Sciatic nerve (tissue), 2 donors: ENCODE measurements at regions of chr18 and their contacts with region 1.

Region 1: GRCh38 chr18:71189581-71189980 is 900.7 kb downstream of the SOCS6 start:
- DNase-seq: no peak
- ATAC-seq: no peak

Region 2: DNA sequence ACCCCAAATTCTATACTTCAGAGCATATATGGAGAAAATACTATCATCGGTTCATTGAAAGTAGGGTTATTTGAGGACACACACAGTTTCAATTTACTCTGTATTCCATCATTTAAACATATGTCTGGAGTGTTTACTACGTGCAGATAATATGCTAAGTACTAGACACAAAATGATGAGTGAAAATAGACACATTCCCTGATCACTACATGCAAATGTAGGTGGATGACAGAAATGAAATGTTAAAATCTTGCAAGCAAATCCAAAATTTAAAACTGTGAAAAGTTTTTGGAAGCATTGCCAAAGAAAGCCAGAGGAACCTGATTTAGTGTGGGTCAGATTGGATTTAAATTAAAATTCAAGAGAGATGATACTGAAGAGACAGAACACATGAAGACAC is 247.9 kb after region 1 on chr18:
- intact Hi-C with region 1: loop called (anchors 5 kb)
- DNase-seq: no peak
- ATAC-seq: no peak

Region 3: DNA sequence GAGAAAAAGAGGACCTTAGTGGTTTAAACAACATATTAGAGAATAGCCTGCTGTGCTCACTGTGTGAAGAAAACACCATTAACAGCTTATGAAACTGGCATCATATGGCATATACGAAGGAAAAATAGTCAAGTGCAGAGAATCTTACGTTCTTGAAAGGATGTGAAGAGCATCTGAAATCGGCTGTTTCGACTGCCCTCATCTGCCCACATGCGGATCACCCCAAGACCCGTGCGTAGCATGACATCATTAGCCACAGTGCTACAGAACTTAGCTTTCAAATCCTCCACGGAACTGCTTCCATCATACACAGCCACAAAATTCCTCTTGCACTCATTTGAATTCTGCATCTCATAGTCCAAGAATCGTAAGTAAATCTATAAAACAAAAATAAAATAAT is 1593.9 kb after region 1 on chr18:
- intact Hi-C with region 1: no loop called
- DNase-seq: no peak
- ATAC-seq: no peak